ENCODE measurements at regions of chr16 and their contacts with region 1.

Region 1: DNA sequence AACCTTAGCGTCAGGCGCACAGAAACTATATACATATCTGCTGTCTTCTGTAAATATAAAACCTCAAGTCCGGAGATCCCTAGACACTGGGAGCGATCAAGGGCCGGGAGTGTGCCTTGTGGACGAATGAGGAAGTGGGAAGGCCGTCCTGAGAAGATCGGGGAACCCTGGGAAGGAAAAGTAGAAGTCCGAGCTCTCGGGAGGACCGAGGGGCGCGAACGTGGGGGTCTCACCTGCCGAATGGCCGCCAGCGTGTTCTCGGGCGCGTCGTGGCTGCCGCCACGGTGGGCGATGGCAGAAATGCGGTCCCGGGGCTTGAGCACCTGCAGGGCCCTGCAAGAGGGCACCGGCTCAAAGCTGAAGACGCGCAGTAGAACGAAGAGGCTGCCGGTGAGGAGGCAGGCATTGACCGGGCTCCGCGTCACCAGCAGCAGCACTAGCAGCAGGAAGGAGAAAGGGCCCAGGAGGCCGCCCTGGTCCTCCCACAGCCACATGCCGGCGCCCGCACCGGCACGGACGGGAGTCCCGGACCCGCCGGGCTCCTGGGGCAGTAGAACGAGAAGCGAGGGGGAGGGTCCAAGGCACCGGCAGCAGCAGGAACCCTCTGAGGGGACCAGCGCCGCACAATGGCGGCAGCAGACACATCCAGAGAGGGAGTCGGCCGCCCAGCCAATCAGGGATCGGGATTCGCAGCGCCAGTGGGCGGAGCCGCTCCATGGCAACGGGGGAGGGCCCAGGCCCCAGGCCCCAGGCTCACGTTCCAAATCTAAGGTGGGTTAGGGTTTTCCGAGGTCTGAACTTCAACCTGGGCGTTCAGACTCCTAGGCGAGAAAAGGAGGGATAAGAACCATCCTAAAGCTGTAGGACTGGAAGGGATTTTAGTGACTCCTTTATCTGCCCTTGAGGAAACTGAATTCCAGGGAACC is at the start of gene GDE1:
- DNase-seq: peak; percentile 85 to 97 (median 93)
- ATAC-seq: peak; percentile 76
- H3K4me3 ChIP-seq: peak within 1 kb of the TSS; percentile 93
- H3K4me3 Mint-ChIP-seq: peak within 1 kb of the TSS; percentile 99
- H3K27ac ChIP-seq: peak within 1 kb of the TSS; percentile 58 to 78
- H3K27ac Mint-ChIP-seq: peak within 1 kb of the TSS; percentile 84
- H3K4me1 ChIP-seq: peaks cover 55% of the 10 kb centered on the region
- H3K4me1 Mint-ChIP-seq: peaks cover 69% of the 10 kb centered on the region
- H3K27me3 ChIP-seq: no peaks in the 10 kb centered on the region
- H3K27me3 Mint-ChIP-seq: no peaks in the 10 kb centered on the region
- CTCF ChIP-seq: peak; percentile 27
- total RNA-seq, gene GDE1: 22.0 to 22.2 TPM

Region 2: DNA sequence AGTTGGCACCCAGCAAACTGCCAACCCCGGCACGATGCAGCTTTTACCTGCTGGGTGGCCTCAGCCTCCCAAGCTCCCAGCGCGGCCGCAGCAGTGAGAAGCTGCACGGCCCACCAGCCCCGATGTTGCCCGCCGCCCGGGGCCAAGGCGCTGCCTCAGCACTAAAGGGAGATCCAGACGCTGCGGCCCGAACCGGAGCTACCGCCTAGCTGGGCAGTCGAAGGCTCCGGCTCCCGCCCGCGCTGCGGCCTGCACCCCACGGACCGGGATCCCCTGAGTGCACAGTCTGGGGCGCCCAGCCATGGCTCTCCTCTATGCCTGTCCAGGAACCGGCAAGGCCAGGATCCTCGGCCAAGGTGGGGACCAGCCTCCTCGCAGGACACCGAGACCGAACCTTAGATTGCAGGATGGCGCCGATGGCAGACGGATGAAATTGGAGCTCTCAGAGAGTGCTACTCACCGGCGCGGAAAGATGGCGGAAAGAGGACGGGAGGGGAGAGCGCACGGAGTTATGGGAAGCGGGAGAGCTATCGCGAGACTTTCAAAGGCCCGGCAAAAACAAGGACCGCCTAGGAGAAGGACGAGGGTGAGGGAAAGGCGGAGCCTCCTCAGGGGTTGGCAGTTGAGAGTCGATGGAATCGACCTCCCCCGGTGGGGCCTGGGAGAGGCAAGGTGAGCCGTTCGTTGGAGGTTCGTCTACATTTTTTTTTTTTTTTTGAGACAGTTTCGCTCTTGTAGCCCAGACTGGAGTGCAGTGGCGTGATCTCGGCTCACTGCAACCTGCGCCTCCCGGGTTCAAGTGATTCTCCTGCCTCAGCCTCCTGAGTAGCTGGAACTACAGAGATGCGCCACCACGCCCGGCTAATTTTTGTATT is 731.6 kb before region 1 on chr16 and contains the start of gene RPS15A:
- CTCF ChIA-PET with region 1: interaction called, 3 read pairs
- POLR2A ChIA-PET with region 1: no interaction called
- intact Hi-C with region 1: loop called in 1 of 2 experiments (anchors 2 kb)
- DNase-seq: peak; percentile 84 to 99 (median 89)
- ATAC-seq: peak; percentile 94
- H3K4me3 ChIP-seq: peak within 1 kb of the TSS; percentile 79
- H3K4me3 Mint-ChIP-seq: peak within 1 kb of the TSS; percentile 92
- H3K27ac ChIP-seq: peak within 1 kb of the TSS; percentile 63 to 66
- H3K27ac Mint-ChIP-seq: peak within 1 kb of the TSS; percentile 83
- H3K4me1 ChIP-seq: peaks cover 47% of the 10 kb centered on the region
- H3K4me1 Mint-ChIP-seq: peaks cover 49% of the 10 kb centered on the region
- H3K27me3 ChIP-seq: no peaks in the 10 kb centered on the region
- H3K27me3 Mint-ChIP-seq: no peaks in the 10 kb centered on the region
- CTCF ChIP-seq: no peak
- total RNA-seq, gene RPS15A: 3,821 to 3,943 TPM

Region 3: GRCh38 chr16:19717771-19718602 is 196.3 kb after region 1 on chr16 and contains the starts of genes IQCK and KNOP1:
- CTCF ChIA-PET with region 1: no interaction called
- POLR2A ChIA-PET with region 1: no interaction called
- intact Hi-C with region 1: loop called in 1 of 2 experiments (anchors 5 kb)
- DNase-seq: peak; percentile 74 to 98 (median 84)
- ATAC-seq: peak; percentile 93
- H3K4me3 ChIP-seq: peak within 1 kb of the TSS; percentile 73
- H3K4me3 Mint-ChIP-seq: peak within 1 kb of the TSS; percentile 93
- H3K27ac ChIP-seq: peak within 1 kb of the TSS in 1 of 2 donors; percentile 30
- H3K27ac Mint-ChIP-seq: peak within 1 kb of the TSS; percentile 33
- H3K4me1 ChIP-seq: peaks cover 23% of the 10 kb centered on the region
- H3K4me1 Mint-ChIP-seq: peaks cover 40% of the 10 kb centered on the region
- H3K27me3 ChIP-seq: no peaks in the 10 kb centered on the region
- H3K27me3 Mint-ChIP-seq: no peaks in the 10 kb centered on the region
- CTCF ChIP-seq: no peak
- total RNA-seq, gene IQCK: 1.6 to 1.7 TPM
- total RNA-seq, gene KNOP1: 3.5 to 4.1 TPM

Region 4: DNA sequence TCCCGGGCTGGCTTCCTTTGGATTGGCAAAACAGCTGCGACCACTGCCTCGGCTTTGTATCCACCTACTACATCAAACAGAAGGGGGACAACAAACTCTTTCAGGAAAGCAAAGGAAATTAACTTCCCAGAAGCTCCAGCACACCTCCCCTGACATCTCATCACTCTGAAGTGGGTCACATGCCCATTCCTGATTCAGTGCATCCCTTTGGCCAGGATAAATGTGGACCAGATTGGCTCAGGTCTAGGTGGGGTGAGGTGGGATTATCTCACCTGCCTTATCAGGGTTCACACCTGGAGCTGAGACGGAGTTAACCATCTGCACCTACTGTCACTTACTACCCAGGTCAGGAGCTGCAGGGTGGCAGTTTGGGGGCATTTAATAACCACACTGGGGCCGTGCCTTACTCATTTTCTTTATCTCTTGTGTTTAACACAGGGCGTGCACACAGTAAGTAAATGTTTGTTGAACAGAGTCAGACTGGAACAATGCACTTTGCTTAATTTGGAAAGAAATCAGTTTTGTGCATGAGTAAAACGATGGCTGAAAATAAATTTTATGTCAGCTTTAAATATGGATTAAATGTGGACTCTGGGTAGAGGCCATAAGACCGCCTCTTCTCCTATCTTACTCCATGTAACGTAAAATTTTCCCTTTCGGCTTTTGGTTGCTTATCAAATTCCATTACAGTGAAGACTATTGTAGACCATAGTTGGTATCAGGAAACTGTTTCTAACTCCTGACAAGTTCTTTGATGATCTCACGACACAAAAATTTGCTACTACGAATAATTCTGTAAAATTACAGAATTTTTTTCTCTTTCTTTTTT is 232.3 kb after region 1 on chr16:
- CTCF ChIA-PET with region 1: no interaction called
- POLR2A ChIA-PET with region 1: no interaction called
- intact Hi-C with region 1: no loop called
- DNase-seq: no peak
- ATAC-seq: no peak
- H3K4me3 ChIP-seq: no peak overlapping the region
- H3K4me3 Mint-ChIP-seq: no peak overlapping the region
- H3K27ac ChIP-seq: no peak overlapping the region
- H3K27ac Mint-ChIP-seq: no peak overlapping the region
- H3K4me1 ChIP-seq: no peaks in the 10 kb centered on the region
- H3K4me1 Mint-ChIP-seq: no peaks in the 10 kb centered on the region
- H3K27me3 ChIP-seq: no peaks in the 10 kb centered on the region
- H3K27me3 Mint-ChIP-seq: no peaks in the 10 kb centered on the region
- CTCF ChIP-seq: no peak

Region 5: GRCh38 chr16:20747030-20747816 is 1225.5 kb after region 1 on chr16:
- CTCF ChIA-PET with region 1: no interaction called
- POLR2A ChIA-PET with region 1: no interaction called
- intact Hi-C with region 1: loop called in 1 of 2 experiments (anchors 5 kb)
- DNase-seq: peak in 1 of 14 experiments; percentile 18
- ATAC-seq: no peak
- H3K4me3 ChIP-seq: no peak overlapping the region
- H3K4me3 Mint-ChIP-seq: no peak overlapping the region
- H3K27ac ChIP-seq: no peak overlapping the region
- H3K27ac Mint-ChIP-seq: no peak overlapping the region
- H3K4me1 ChIP-seq: peaks cover under 1% of the 10 kb centered on the region
- H3K4me1 Mint-ChIP-seq: no peaks in the 10 kb centered on the region
- H3K27me3 ChIP-seq: no peaks in the 10 kb centered on the region
- H3K27me3 Mint-ChIP-seq: peaks cover under 1% of the 10 kb centered on the region
- CTCF ChIP-seq: no peak

Measured in CD4-positive, alpha-beta T cell (primary cell).